Activated naive CD4-positive, alpha-beta T cell treated with anti-CD3 and anti-CD28 coated beads for 36 hours (primary cell): ENCODE measurements at regions of chr15 and their contacts with region 1.

Region 1: DNA sequence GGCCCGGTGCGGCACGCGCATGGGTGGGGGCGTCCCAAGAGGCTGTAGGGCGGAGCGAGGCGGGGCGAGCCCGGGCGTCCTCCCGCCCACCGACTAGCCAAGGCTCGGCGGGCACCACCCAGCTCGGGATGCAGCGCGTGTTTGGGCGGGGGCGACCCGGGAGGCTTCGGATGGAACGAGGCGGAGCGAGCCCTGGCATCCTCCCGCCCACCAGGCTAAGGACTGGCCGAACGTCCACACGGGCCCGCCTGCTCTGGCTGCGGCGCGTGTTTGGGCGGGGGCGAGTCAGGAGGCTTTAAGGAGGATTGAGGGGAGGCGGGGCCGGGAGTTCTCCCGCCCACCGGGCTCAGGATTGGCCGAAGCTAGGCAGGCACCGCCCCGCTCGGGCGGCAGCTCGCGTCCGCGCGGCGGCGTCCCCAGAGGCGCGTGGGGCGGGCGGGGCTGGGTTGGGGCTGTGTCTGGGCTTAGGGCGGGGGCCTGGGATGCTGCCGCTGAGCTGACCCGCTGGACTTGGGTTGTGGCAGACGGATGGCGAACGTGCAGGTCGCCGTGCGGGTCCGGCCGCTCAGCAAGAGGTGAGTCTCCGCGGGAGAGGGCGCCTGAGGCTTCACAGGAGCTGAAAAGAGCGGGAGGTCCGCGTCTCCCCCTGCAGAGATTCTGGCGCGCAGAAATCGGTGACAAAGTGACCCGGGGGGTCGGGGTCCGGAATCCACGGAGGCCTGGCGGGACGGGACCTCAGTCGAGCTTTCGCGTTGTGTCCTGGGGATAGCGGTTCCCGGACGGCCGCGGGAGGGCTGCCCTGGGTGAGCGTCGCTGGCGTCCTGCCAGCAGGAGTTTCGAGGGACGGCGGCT is at the start of gene STARD9:
- DNase-seq: peak; percentile 95
- H3K4me3 Mint-ChIP-seq: peak within 1 kb of the TSS; percentile 86
- H3K27ac Mint-ChIP-seq: no peak within 1 kb of the TSS
- H3K4me1 Mint-ChIP-seq: peaks cover 14% of the 10 kb centered on the region
- H3K27me3 Mint-ChIP-seq: peaks cover 28% of the 10 kb centered on the region
- total RNA-seq, gene STARD9: 1.9 to 2.5 TPM

Region 2: DNA sequence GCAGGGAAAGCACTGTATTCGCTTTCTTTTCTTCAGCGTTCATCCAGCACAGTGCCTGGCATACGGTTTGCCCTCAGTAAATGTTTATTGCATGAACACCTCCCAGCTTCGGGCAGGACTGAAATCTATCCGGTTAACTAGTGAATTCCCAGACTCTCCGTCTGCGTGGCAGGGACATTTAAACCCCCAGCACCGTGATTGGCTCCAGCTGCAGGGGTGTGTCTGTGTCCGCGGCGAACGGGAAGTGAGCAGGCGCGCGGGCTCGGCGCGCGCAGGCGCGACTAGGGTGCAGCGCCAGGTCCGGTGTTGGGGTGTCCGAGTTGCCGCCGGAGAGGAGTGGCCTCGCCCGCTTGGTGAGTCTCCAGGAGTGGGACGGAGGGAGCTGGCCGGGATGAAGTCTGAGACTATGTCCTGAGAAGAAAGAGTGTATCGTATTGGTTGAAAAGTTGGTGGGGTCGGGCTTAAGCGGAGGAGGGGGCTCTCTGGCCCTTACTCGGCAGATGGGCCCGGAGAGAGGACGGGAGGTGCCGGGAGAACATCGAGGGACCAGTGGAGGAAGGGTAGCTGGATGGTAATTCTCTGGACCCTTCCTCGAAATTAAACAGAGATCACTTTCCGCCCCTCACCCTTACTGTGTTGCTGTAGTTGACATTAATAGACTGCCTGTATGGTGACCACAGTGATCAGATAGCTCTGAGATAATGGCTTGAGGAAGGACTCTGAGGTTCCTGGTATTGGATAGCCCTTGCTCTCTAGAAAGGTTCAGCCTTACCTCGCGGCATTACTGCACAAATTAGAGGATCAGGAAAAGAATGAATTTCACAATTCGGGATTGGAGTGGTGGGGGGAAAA is 79.8 kb before region 1 on chr15 and contains the start of gene SNAP23:
- CTCF ChIA-PET with region 1: no interaction called
- intact Hi-C with region 1: loop called (anchors 1 kb)
- DNase-seq: peak; percentile 87
- H3K4me3 Mint-ChIP-seq: peak within 1 kb of the TSS; percentile 99
- H3K27ac Mint-ChIP-seq: peak within 1 kb of the TSS; percentile 94
- H3K4me1 Mint-ChIP-seq: peaks cover 65% of the 10 kb centered on the region
- H3K27me3 Mint-ChIP-seq: no peaks in the 10 kb centered on the region
- total RNA-seq, gene SNAP23: 33.1 to 34.5 TPM

Region 3: DNA sequence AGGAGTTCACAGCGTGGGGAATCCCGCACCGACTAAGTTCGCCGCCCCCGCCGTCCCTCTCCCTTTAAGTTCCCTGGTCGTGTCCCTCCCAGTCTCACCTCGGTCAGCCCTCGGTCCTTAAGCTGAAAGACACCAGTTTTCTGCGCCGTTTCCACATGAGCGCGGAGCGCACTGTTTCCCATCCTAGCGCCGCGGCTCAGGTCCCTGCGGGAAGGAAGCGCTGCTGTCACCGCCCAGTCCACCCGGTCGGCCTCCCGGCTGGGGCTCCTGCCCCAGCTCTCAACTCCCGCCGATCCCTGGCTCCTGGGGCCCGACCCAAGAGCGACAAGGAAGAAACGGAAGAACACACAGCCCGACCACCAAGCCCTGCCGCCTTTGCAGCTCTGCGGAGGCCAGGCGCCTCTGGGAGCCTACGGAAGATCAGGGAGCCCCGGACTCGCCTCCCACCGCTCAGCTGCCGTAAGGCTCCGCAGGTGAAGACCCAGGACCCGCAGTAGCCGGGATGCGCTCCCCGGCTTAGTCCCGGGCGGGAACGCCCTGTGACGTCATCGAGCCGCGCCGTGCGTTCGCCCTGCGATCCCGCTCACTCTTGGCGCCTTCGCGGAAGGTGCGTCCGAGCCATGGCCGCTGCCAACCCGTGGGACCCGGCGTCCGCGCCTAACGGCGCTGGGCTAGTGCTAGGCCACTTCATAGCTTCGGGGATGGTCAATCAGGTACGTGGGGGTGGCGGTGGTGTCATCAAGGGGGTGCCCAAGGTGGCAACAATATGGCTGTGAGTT is 27.0 kb before region 1 on chr15 and contains the starts of genes HAUS2 and LRRC57:
- CTCF ChIA-PET with region 1: no interaction called
- intact Hi-C with region 1: loop called (anchors 1 kb)
- DNase-seq: peak; percentile 90
- H3K4me3 Mint-ChIP-seq: peak within 1 kb of the TSS; percentile 95
- H3K27ac Mint-ChIP-seq: peak within 1 kb of the TSS; percentile 89
- H3K4me1 Mint-ChIP-seq: peaks cover 41% of the 10 kb centered on the region
- H3K27me3 Mint-ChIP-seq: no peaks in the 10 kb centered on the region
- total RNA-seq, gene HAUS2: 46.2 to 55.6 TPM
- total RNA-seq, gene LRRC57: 14.7 to 16.3 TPM

Region 4: GRCh38 chr15:42650208-42651066 is 75.0 kb after region 1 on chr15:
- CTCF ChIA-PET with region 1: no interaction called
- intact Hi-C with region 1: loop called (anchors 1 kb)
- DNase-seq: peak; percentile 84
- H3K4me3 Mint-ChIP-seq: no peak overlapping the region
- H3K27ac Mint-ChIP-seq: no peak overlapping the region
- H3K4me1 Mint-ChIP-seq: no peaks in the 10 kb centered on the region
- H3K27me3 Mint-ChIP-seq: no peaks in the 10 kb centered on the region

Region 5: DNA sequence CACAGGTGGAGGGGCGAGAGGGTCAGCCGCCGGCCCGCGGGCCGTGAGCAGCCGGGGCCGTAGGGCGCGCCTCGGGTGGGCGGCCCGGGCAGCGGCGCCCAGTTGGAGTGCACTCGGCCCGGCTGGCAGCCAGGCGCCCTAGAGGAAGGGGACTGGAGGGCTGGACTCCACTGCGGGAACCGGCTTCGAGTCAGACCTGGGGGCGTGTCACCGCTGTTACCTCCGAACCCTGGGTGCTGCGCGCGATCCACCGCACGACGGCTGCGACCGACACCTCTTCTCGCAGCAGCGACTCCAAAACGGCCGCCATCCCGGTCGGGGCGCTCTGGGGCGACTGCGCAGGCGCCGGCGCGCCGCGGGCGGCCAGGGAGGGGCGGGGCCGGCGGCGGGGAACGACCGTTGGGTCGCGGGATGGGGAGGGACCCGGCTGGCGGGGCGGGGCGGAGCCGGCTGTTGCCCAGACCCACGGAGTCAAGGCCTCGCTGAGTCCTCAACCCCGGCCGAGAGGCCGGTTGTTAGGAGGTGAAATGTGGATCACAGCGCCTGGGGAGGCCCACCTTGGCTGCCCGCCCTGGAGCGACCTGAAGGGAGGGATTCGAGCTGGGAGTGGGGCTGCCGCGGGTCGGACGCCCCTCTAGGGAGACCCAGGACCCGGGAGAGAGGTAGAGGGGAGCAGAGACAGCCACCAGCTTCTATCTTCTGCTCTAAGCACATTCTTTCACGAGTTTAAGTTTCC is 161.5 kb after region 1 on chr15 and contains the start of gene CDAN1:
- CTCF ChIA-PET with region 1: no interaction called
- intact Hi-C with region 1: loop called (anchors 2 kb)
- DNase-seq: peak; percentile 92
- H3K4me3 Mint-ChIP-seq: peak within 1 kb of the TSS; percentile 78
- H3K27ac Mint-ChIP-seq: peak within 1 kb of the TSS; percentile 69
- H3K4me1 Mint-ChIP-seq: peaks cover 11% of the 10 kb centered on the region
- H3K27me3 Mint-ChIP-seq: no peaks in the 10 kb centered on the region
- total RNA-seq, gene CDAN1: 19.9 to 21.9 TPM

Region 6: GRCh38 chr15:43194795-43195194 is 619.4 kb after region 1 on chr15:
- CTCF ChIA-PET with region 1: no interaction called
- intact Hi-C with region 1: no loop called
- DNase-seq: no peak
- H3K4me3 Mint-ChIP-seq: no peak overlapping the region
- H3K27ac Mint-ChIP-seq: no peak overlapping the region
- H3K4me1 Mint-ChIP-seq: no peaks in the 10 kb centered on the region
- H3K27me3 Mint-ChIP-seq: no peaks in the 10 kb centered on the region